Right cardiac atrium (tissue), 5 donors: ENCODE measurements at regions of chr10 and their contacts with region 1.

Region 1: GRCh38 chr10:132654702-132655661 is 117.4 kb downstream of the INPP5A start:
- DNase-seq: peak; percentile 57 to 83 (median 80)
- ATAC-seq: peak; percentile 11 to 36
- H3K4me3 ChIP-seq: no peak overlapping the region
- H3K27ac ChIP-seq: no peak overlapping the region
- H3K4me1 ChIP-seq: no peaks in the 10 kb centered on the region
- H3K27me3 ChIP-seq: no peaks in the 10 kb centered on the region

Region 2: DNA sequence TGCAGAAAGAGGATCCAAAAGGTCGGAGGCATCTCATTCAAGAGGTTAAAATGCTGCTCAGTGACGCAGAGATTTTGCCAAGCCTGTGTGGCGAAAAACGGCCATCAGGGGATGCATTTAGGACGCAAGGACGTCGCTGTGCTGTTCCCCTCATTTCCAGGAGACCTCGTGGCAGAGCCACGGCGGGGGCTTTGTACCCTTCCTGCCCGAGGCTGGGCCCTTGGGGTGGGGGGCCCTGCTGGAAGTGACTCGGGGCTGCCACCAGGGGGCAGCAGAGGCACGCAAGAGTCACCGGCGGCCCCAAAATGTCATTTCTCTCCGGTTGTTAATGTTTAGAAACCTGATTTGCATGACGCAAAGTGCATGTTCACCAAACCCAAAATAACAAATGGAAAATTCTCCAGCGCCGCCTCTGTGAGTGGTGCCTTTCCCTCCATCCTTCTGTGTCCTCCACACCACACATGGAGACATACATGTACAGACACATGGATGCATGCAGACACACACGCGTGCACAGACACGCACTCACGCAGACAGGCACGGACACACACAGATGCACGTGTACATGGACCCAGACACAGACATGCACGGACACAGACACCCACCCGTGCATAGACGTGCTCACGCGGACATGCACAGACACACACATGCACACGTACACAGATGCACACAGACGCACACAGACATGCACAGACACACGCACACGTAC is 182.0 kb after region 1 on chr10:
- intact Hi-C with region 1: loop called in 1 of 4 experiments (anchors 10 kb)
- DNase-seq: no peak
- ATAC-seq: peak; percentile 47 to 56
- H3K4me3 ChIP-seq: no peak overlapping the region
- H3K27ac ChIP-seq: no peak overlapping the region
- H3K4me1 ChIP-seq: no peaks in the 10 kb centered on the region
- H3K27me3 ChIP-seq: no peaks in the 10 kb centered on the region